Activated CD8-positive, alpha-beta T cell treated with anti-CD3 and anti-CD28 coated beads, Interleukin-2, amount 10 ng/mL, durations not matched to agents 7 days and 5 days (primary cell): ENCODE measurements at regions of chr7 and their contacts with region 1.

Region 1: DNA sequence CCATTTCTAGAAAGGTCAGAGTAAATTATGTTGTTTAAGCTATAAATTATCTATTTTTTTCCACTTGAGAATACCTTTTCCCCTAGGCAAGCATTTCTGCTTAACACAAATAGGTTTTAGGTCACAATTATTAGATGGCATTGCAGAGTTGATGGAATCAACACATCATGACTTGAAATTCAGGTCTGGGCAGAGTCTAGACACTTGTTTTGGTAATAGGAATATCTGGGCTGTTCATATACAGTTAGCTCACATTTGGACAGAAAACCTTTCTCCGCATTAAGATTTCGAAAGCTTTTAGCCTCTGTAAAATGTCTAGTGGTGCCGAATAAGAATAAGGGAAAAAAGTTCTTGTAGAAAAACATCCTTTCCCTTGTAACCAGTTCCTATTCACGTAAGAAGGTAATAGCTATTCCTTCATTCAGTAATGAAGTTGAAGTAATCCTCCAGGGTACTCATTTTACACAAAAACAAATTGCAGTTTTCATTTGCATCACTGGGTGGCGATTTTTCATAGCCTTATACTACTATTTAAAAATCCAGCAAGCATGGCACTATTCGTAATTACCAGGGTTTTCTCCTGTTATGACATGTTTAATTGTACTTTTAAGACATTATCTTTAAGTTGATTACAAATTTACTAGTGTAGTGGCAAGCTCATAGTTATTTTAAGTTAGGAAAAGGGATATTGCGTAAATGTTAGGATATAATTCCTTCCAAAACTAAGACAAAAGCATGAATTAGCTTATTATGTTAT is 37.0 kb downstream of the RPA3 start:
- DNase-seq: peak; percentile 67
- ATAC-seq: peak; percentile 69
- H3K4me3 Mint-ChIP-seq: no peak overlapping the region
- H3K27ac Mint-ChIP-seq: no peak overlapping the region
- H3K4me1 Mint-ChIP-seq: peaks cover 19% of the 10 kb centered on the region
- H3K27me3 Mint-ChIP-seq: no peaks in the 10 kb centered on the region

Region 2: GRCh38 chr7:7696458-7697119 is 15.2 kb after region 1 on chr7:
- CTCF ChIA-PET with region 1: interaction called, 16 read pairs
- POLR2A ChIA-PET with region 1: no interaction called
- DNase-seq: no peak
- ATAC-seq: no peak
- H3K4me3 Mint-ChIP-seq: no peak overlapping the region
- H3K27ac Mint-ChIP-seq: no peak overlapping the region
- H3K4me1 Mint-ChIP-seq: peaks cover 12% of the 10 kb centered on the region
- H3K27me3 Mint-ChIP-seq: no peaks in the 10 kb centered on the region

Region 3: DNA sequence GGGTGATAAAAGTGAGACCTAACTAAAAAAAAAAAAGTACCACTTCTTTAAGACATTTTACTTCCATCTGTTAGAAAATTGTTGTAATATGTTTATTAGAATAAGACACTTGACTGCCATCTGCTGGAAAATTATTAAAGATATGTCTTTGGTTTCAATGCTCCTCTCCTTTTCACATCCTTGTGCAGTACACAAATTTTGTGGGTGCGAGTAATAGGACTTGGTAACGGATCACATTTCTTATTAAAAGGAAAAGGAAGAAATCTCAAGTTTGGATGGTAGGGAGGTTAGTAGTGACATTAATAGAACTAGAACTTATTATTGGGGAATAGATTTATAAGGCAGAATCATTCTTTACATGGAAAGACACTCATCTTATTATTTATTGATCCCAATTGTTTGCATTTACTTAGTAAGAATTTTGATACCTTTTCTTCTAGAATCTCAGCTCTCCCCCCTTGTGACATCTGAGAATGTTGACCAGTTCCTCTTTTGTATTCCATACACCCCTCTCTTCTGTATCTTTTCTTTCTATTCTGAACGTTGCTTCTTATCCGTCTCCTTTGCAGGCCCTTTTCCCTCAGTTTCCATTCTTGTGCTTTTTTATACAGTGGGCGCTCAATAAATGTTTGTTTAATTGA is 80.1 kb after region 1 on chr7:
- CTCF ChIA-PET with region 1: interaction called, 60 read pairs
- POLR2A ChIA-PET with region 1: interaction called, 4 read pairs
- DNase-seq: no peak
- ATAC-seq: peak; percentile 35
- H3K4me3 Mint-ChIP-seq: peak overlapping the region; percentile 83
- H3K27ac Mint-ChIP-seq: peak overlapping the region; percentile 90
- H3K4me1 Mint-ChIP-seq: peaks cover 28% of the 10 kb centered on the region
- H3K27me3 Mint-ChIP-seq: no peaks in the 10 kb centered on the region

Region 4: GRCh38 chr7:7799138-7799537 is 117.8 kb after region 1 on chr7:
- CTCF ChIA-PET with region 1: no interaction called
- POLR2A ChIA-PET with region 1: no interaction called
- DNase-seq: no peak
- ATAC-seq: no peak
- H3K4me3 Mint-ChIP-seq: no peak overlapping the region
- H3K27ac Mint-ChIP-seq: no peak overlapping the region
- H3K4me1 Mint-ChIP-seq: peaks cover 6% of the 10 kb centered on the region
- H3K27me3 Mint-ChIP-seq: no peaks in the 10 kb centered on the region

Region 5: GRCh38 chr7:7848246-7848645 is 166.9 kb after region 1 on chr7:
- CTCF ChIA-PET with region 1: no interaction called
- POLR2A ChIA-PET with region 1: no interaction called
- DNase-seq: no peak
- ATAC-seq: peak; percentile 63
- H3K4me3 Mint-ChIP-seq: peak overlapping the region; percentile 32
- H3K27ac Mint-ChIP-seq: peak overlapping the region; percentile 54
- H3K4me1 Mint-ChIP-seq: peaks cover 32% of the 10 kb centered on the region
- H3K27me3 Mint-ChIP-seq: peaks cover under 1% of the 10 kb centered on the region

Region 6: DNA sequence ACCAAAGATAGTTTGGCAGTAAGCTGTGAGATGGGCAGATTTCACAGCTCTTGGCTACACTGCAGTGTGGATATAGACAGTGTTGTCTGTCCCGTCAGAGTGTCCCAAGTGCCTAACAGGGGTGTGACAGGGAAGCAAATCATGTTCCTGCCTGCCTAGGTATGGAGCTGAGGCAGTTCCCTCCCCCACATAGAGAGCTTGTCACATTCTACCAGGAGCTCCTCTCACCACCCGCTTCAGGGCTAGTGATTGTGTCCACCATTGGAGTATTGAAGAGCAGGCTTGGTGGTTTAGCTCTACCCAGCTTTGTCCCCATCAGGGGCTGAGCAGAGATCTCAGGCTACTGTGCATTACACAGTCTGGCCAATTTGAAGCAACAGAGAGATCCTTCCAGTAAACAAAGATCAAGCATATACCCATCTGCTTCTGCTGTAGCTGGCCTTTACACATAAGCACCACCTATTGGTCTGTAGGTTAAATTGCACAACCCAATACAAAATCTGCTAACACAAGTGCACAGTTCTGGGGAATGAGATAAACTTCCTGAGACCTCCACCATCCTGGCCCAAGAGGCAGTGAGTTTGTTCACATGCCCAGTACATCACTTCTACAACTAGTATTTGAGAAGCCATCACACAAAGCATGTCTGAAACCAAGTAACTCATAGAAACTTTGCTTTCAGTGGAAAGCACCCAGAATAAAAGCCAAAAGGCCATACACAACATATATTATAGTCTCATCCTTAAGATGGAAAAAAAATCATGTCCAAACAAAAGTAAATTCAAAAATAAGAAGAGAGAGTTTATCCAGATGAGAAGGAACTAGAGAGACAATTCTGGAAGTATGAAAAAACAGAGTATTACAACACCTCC is 354.5 kb after region 1 on chr7:
- CTCF ChIA-PET with region 1: interaction called, 25 read pairs
- POLR2A ChIA-PET with region 1: no interaction called
- DNase-seq: no peak
- ATAC-seq: peak; percentile 82
- H3K4me3 Mint-ChIP-seq: no peak overlapping the region
- H3K27ac Mint-ChIP-seq: no peak overlapping the region
- H3K4me1 Mint-ChIP-seq: peaks cover 6% of the 10 kb centered on the region
- H3K27me3 Mint-ChIP-seq: no peaks in the 10 kb centered on the region

Region 7: GRCh38 chr7:8190119-8190895 is 508.9 kb after region 1 on chr7:
- CTCF ChIA-PET with region 1: interaction called, 41 read pairs
- POLR2A ChIA-PET with region 1: no interaction called
- DNase-seq: peak; percentile 79
- ATAC-seq: peak; percentile 88
- H3K4me3 Mint-ChIP-seq: no peak overlapping the region
- H3K27ac Mint-ChIP-seq: no peak overlapping the region
- H3K4me1 Mint-ChIP-seq: peaks cover 31% of the 10 kb centered on the region
- H3K27me3 Mint-ChIP-seq: peaks cover 14% of the 10 kb centered on the region

Region 8: GRCh38 chr7:8295638-8296361 is 614.4 kb after region 1 on chr7:
- CTCF ChIA-PET with region 1: interaction called, 20 read pairs
- POLR2A ChIA-PET with region 1: no interaction called
- DNase-seq: peak; percentile 56
- ATAC-seq: peak; percentile 76
- H3K4me3 Mint-ChIP-seq: no peak overlapping the region
- H3K27ac Mint-ChIP-seq: no peak overlapping the region
- H3K4me1 Mint-ChIP-seq: peaks cover 2% of the 10 kb centered on the region
- H3K27me3 Mint-ChIP-seq: peaks cover 10% of the 10 kb centered on the region